Caco-2 (cell line): ENCODE measurements at regions of chr15 and their contacts with region 1.

Region 1: DNA sequence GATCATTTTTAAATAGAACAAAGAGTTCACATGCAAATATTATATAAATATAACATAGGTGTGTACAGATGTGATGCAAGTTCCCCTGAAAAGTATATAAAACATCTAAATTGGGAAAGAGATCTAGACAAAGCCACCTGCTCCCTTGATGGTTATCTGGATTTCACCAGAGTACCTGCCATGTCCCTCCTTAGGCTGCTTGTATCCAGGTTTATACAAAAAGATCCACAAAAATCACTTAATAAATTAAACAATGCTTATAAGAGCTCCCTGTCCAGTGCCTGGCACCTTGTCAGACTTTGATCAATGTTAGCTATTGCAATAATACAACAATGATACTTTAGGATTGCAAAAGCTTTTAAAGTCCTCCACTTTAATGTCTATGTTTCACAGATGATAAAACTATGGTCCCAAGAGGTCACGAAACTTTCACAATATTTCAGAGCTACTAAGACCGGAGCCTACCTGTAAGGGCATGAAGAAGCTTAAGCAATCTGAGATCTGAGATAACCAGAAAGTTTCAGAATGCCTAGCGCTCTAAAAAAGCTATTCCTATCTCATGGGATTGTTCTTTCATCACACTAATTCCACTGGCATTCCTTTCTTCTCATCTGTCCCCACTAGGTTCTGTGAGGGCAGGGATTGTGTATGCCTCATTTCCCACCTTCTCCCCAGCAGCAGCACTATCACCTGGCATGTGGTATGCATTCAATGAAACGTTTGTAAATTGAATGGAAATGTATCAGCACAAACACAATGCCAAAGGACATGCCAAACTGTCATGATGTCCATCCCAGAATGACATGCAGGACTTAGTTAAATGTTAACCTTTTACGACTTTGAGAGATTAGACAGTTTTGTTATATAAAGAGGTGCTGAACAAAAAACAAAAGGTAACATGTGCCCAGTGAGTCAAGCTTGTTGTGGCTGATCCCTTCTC is 104.9 kb upstream of the NR2F2 start:
- DNase-seq: peak; percentile 87 to 91
- H3K4me3 ChIP-seq: no peak overlapping the region
- H3K4me3 Mint-ChIP-seq: peak overlapping the region; percentile 12
- H3K27ac Mint-ChIP-seq: peak overlapping the region; percentile 74
- H3K4me1 ChIP-seq: peaks cover 50% of the 10 kb centered on the region
- H3K4me1 Mint-ChIP-seq: peaks cover 49% of the 10 kb centered on the region
- H3K27me3 ChIP-seq: no peaks in the 10 kb centered on the region
- H3K27me3 Mint-ChIP-seq: no peaks in the 10 kb centered on the region
- CTCF ChIP-seq: no peak

Region 2: GRCh38 chr15:95784508-95784907 is 441.1 kb before region 1 on chr15:
- CTCF ChIA-PET with region 1: no interaction called
- POLR2A ChIA-PET with region 1: no interaction called
- intact Hi-C with region 1: loop called (anchors 1 kb)
- DNase-seq: no peak
- H3K4me3 ChIP-seq: no peak overlapping the region
- H3K4me3 Mint-ChIP-seq: no peak overlapping the region
- H3K27ac Mint-ChIP-seq: peak overlapping the region; percentile 59
- H3K4me1 ChIP-seq: peaks cover 9% of the 10 kb centered on the region; the same call in 1 of the 2 replicates
- H3K4me1 Mint-ChIP-seq: peaks cover 7% of the 10 kb centered on the region
- H3K27me3 ChIP-seq: no peaks in the 10 kb centered on the region
- H3K27me3 Mint-ChIP-seq: no peaks in the 10 kb centered on the region
- CTCF ChIP-seq: no peak

Region 3: DNA sequence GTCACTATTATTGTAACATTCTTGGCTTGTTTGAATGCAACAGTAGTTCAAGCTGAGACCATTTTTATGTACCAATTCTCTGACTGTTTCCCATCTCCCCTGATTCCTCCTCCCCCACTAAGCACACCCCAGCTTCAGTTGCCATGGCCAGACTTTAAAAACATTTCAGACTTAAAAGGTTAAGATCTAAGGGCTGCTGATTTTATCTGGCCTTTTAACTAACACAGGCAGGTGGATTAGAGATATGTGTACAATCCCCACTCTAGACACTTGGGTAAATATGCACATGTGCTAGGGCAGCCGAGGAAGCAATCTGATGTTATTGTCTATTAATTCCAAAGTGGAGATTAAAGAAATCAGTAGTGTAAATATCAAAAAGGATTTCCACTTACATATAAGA is 281.4 kb before region 1 on chr15:
- CTCF ChIA-PET with region 1: no interaction called
- POLR2A ChIA-PET with region 1: no interaction called
- intact Hi-C with region 1: loop called (anchors 1 kb)
- DNase-seq: peak; percentile 46 to 65
- H3K4me3 ChIP-seq: no peak overlapping the region
- H3K4me3 Mint-ChIP-seq: peak overlapping the region; percentile 9
- H3K27ac Mint-ChIP-seq: peak overlapping the region; percentile 65
- H3K4me1 ChIP-seq: peaks cover 17% of the 10 kb centered on the region
- H3K4me1 Mint-ChIP-seq: peaks cover 12% of the 10 kb centered on the region
- H3K27me3 ChIP-seq: no peaks in the 10 kb centered on the region
- H3K27me3 Mint-ChIP-seq: no peaks in the 10 kb centered on the region
- CTCF ChIP-seq: no peak

Region 4: DNA sequence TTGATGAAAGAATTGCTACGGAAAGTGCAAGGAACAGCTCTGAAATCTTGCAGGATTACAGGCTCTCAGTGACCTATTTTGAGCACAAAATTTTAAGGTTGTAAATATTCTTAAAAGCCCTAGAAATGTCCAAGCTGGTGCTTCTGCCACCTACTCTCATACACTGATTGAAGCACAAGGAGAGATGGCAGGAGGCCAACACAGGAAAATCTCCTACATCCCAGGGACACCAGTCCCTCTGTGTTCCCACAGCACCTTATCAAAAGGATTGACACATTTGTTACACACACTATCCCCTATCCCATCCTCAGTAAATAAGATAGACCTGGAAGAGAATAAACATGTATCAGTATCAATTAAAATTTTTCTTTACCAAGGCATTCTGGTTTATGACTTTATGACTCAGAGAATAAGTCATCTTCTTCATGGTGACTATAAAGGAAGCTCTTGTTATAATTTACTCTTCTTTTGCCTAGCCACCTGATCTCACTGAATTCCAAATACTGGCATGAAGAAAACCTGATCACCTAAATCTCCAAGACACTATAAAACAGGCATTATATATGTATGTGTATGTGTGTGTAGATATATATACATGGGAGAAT is 103.4 kb before region 1 on chr15:
- CTCF ChIA-PET with region 1: no interaction called
- POLR2A ChIA-PET with region 1: no interaction called
- intact Hi-C with region 1: loop called (anchors 1 kb)
- DNase-seq: no peak
- H3K4me3 ChIP-seq: no peak overlapping the region
- H3K4me3 Mint-ChIP-seq: peak overlapping the region; percentile 23
- H3K27ac Mint-ChIP-seq: peak overlapping the region; percentile 66
- H3K4me1 ChIP-seq: peaks cover 49% of the 10 kb centered on the region
- H3K4me1 Mint-ChIP-seq: peaks cover 54% of the 10 kb centered on the region
- H3K27me3 ChIP-seq: no peaks in the 10 kb centered on the region
- H3K27me3 Mint-ChIP-seq: no peaks in the 10 kb centered on the region
- CTCF ChIP-seq: no peak

Region 5: GRCh38 chr15:96200357-96200967 is 25.1 kb before region 1 on chr15:
- CTCF ChIA-PET with region 1: interaction called, 4 read pairs
- POLR2A ChIA-PET with region 1: no interaction called
- intact Hi-C with region 1: loop called (anchors 1 kb)
- DNase-seq: peak; percentile 68 to 76
- H3K4me3 ChIP-seq: no peak overlapping the region
- H3K4me3 Mint-ChIP-seq: peak overlapping the region; percentile 24
- H3K27ac Mint-ChIP-seq: peak overlapping the region; percentile 72
- H3K4me1 ChIP-seq: peaks cover 44% of the 10 kb centered on the region
- H3K4me1 Mint-ChIP-seq: peaks cover 29% of the 10 kb centered on the region
- H3K27me3 ChIP-seq: no peaks in the 10 kb centered on the region
- H3K27me3 Mint-ChIP-seq: no peaks in the 10 kb centered on the region
- CTCF ChIP-seq: no peak

Region 6: DNA sequence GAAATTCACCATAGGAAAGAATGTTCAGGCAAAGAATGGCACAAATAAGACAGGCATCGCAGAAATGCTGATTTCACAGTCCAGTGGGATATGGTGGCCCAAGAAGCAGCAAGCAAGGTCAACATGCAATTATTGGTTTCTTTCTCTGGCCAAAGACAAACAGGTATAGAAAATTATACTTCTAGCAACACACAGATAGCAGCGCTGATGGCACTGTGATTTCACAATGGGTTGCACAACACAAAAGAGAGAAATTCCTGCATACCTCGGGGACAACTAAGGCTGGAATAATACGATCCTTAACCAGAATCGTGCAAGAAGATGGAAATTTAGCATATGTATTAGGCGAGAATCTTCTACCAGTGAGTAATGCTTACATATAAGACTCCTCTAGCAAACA is 28.6 kb after region 1 on chr15:
- CTCF ChIA-PET with region 1: no interaction called
- POLR2A ChIA-PET with region 1: no interaction called
- intact Hi-C with region 1: loop called (anchors 1 kb)
- DNase-seq: peak; percentile 59 to 65
- H3K4me3 ChIP-seq: no peak overlapping the region
- H3K4me3 Mint-ChIP-seq: peak overlapping the region; percentile 43
- H3K27ac Mint-ChIP-seq: peak overlapping the region; percentile 77
- H3K4me1 ChIP-seq: peaks cover 49% of the 10 kb centered on the region
- H3K4me1 Mint-ChIP-seq: peaks cover 44% of the 10 kb centered on the region
- H3K27me3 ChIP-seq: no peaks in the 10 kb centered on the region
- H3K27me3 Mint-ChIP-seq: no peaks in the 10 kb centered on the region
- CTCF ChIP-seq: no peak

Region 7: GRCh38 chr15:96484830-96485229 is 259.2 kb after region 1 on chr15:
- CTCF ChIA-PET with region 1: no interaction called
- POLR2A ChIA-PET with region 1: no interaction called
- intact Hi-C with region 1: no loop called
- DNase-seq: no peak
- H3K4me3 ChIP-seq: no peak overlapping the region
- H3K4me3 Mint-ChIP-seq: no peak overlapping the region
- H3K27ac Mint-ChIP-seq: no peak overlapping the region
- H3K4me1 ChIP-seq: no peaks in the 10 kb centered on the region
- H3K4me1 Mint-ChIP-seq: no peaks in the 10 kb centered on the region
- H3K27me3 ChIP-seq: no peaks in the 10 kb centered on the region; the same call in 1 of the 2 replicates
- H3K27me3 Mint-ChIP-seq: peaks cover 12% of the 10 kb centered on the region
- CTCF ChIP-seq: no peak

Region 8: DNA sequence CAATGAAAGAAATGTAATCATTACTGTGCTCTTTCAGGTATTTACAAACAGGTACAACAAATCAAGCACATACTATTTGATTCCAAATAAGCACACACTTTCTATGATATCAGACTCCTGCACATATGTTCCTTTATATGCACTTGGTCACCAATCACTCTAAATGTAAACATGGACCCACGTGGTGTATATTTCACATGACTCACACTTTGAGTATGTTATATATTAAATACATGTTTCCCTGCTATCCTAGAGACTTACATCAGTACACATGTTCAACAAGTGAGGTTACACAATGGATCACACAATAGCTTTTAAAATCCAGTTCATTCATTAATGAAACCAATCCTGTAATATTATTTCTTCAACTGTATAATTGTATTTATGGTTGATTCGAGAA is 788.4 kb after region 1 on chr15:
- CTCF ChIA-PET with region 1: no interaction called
- POLR2A ChIA-PET with region 1: no interaction called
- intact Hi-C with region 1: no loop called
- DNase-seq: no peak
- H3K4me3 ChIP-seq: no peak overlapping the region
- H3K4me3 Mint-ChIP-seq: no peak overlapping the region
- H3K27ac Mint-ChIP-seq: no peak overlapping the region
- H3K4me1 ChIP-seq: peaks cover 27% of the 10 kb centered on the region
- H3K4me1 Mint-ChIP-seq: peaks cover 7% of the 10 kb centered on the region
- H3K27me3 ChIP-seq: no peaks in the 10 kb centered on the region
- H3K27me3 Mint-ChIP-seq: no peaks in the 10 kb centered on the region
- CTCF ChIP-seq: no peak